Breast epithelium (tissue), 4 donors: ENCODE measurements at regions of chr17 and their contacts with region 1.

Region 1: DNA sequence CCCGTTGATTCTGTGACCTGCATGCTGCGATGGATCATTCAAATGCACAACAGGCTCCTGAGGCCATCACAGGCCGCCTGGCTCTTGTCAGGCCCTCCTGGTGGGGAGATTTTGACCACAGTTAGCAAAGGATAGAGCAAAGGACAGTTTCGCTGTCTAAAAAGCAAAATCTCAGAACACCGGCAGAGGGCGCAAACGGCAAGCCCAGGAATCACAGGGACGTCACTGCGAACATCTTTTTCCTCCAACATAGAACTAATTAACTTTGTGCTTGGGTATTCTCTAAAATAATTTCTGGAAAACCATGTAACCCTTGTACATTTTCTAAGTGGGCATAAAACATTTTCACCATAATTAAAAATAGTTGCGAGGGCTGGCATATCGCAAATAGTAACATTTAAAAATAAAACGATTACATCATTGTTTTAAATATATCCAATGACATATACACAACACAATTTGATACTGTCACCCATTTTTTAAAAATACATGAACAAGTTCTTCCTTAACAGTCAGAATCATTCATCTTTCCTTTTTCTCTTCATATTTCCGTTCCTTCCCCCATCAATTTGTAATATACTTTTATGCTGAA is 19.7 kb upstream of the SLC47A1 start:
- DNase-seq: peak; percentile 53 to 61
- H3K4me3 ChIP-seq: no peak overlapping the region
- H3K27ac ChIP-seq: no peak overlapping the region
- H3K4me1 ChIP-seq: no peaks in the 10 kb centered on the region
- H3K27me3 ChIP-seq: no peaks in the 10 kb centered on the region
- CTCF ChIP-seq: peak; percentile 74 to 91 (median 91)
- POLR2A ChIP-seq: no peak

Region 2: GRCh38 chr17:19558946-19559345 is 45.0 kb after region 1 on chr17:
- intact Hi-C with region 1: no loop called
- DNase-seq: no peak
- H3K4me3 ChIP-seq: no peak overlapping the region
- H3K27ac ChIP-seq: no peak overlapping the region
- H3K4me1 ChIP-seq: no peaks in the 10 kb centered on the region
- H3K27me3 ChIP-seq: no peaks in the 10 kb centered on the region
- CTCF ChIP-seq: no peak
- POLR2A ChIP-seq: no peak

Region 3: DNA sequence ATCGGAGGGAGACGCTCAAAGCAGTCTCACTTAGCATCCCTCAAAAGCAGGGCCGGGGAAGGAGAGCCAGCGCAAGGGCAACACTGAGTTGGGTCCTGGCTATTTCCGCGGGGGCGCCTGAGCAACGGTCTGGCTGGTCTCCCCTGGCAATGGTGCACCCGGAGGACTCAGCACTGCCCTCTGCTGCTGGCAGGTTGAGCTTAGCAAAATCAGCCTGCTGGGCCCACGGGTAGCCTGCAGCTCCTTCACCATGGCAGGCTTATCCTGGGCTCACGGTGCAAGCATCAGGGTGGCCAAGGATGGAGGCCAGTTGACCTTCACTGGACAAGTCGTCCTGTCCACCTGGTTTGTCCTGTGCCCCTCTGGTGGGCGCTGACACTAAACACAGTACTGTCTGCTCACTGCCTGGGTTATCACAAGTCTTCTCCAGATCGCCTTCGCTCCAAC is 248.5 kb after region 1 on chr17:
- intact Hi-C with region 1: loop called (anchors 2 kb)
- DNase-seq: peak in 1 of 2 donors; percentile 50
- H3K4me3 ChIP-seq: no peak overlapping the region
- H3K27ac ChIP-seq: no peak overlapping the region
- H3K4me1 ChIP-seq: no peaks in the 10 kb centered on the region
- H3K27me3 ChIP-seq: no peaks in the 10 kb centered on the region
- CTCF ChIP-seq: peak; percentile 27 to 71 (median 54)
- POLR2A ChIP-seq: no peak